GM12878 (cell line): ENCODE measurements at regions of chr3 and their contacts with region 1.

Region 1: DNA sequence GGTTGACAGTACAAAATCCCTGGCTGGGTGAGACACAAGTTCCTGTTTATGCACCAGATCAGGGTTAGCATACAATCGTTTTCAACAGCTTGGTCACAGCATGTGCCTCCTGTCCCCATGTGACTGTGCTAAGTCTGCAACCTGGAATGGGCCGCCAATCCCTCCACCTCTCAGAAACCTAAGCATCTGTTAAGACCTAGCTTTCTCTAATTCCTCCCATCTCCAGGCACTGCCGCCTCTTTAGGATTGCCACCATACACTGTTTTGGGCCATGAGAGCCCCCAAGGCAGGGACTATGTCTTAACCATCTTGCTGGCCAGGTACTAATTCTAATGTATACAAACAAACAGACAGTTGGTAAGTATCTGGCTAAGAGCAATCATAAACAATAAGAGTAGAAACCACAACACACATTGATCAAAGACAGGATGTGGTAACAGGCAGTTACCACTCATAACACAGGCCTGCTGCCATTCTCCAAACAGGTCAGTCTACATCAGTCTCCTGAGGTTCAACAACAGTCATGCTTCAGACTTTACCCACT is 25.6 kb downstream of the SEC22C start:
- DNase-seq: no peak
- ATAC-seq: peak; percentile 82
- H3K4me3 ChIP-seq: no peak overlapping the region
- H3K27ac ChIP-seq: no peak overlapping the region
- H3K4me1 ChIP-seq: peaks cover 3% of the 10 kb centered on the region; the same call in 1 of the 2 replicates
- H3K27me3 ChIP-seq: no peaks in the 10 kb centered on the region
- CTCF ChIP-seq: no peak
- EP300 ChIP-seq: no peak
- POLR2A ChIP-seq: no peak
- RAD21 ChIP-seq: no peak

Region 2: DNA sequence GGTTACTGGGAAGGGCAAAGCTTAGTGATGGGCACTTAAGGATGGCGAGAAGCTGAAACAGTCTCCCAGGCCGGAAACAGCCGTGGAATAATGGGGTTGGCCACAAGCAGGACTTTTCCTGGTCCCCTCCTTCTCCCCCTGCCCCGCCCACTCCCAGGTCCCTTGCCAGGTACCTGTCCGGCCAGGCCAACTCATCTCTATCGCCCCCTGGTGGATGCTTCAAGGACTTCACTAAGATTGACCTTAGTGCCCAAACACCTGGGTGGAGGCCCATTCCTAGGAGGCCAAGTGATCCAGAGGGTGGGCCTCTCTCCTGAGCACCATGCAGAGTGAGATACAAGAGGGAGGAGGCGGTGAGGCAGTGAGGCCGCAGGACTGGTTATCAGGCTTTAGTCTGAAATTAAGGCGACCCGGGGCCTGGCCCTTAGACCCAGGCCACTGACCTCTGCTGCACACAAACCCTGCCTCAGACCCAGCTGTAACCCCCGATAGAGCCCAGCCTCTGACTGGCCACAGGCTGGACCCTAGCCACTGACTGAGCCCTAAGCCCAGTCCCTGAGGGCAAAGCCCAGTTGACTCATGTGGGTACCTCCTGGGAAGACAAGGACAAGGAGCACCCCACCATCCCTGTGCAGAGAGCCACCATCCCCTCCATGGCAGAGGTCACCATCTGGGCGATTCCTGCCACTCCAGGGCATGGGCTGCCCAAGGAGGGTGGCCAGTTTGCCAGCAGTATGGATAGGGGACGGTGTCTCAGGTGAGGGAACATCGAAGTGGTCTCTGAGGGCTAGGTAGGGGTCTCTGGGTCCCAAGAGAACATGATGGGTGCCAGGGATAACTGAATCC is 16.1 kb before region 1 on chr3:
- CTCF ChIA-PET with region 1: interaction called, 13 read pairs
- POLR2A ChIA-PET with region 1: no interaction called
- RAD21 ChIA-PET with region 1: no interaction called
- SMC1A ChIA-PET with region 1: no interaction called
- in situ Hi-C with region 1: no loop called
- intact Hi-C with region 1: no loop called
- DNase-seq: no peak
- ATAC-seq: peak; percentile 93
- H3K4me3 ChIP-seq: no peak overlapping the region
- H3K27ac ChIP-seq: no peak overlapping the region
- H3K4me1 ChIP-seq: no peaks in the 10 kb centered on the region
- H3K27me3 ChIP-seq: no peaks in the 10 kb centered on the region
- CTCF ChIP-seq: peak; percentile 65 to 88 (median 79)
- EP300 ChIP-seq: no peak
- POLR2A ChIP-seq: no peak
- RAD21 ChIP-seq: peak; percentile 48; the same call in 1 of the 2 replicates